Posterior cingulate gyrus (tissue), 11 donors: ENCODE measurements at regions of chr14 and their contacts with region 1.

Region 1: DNA sequence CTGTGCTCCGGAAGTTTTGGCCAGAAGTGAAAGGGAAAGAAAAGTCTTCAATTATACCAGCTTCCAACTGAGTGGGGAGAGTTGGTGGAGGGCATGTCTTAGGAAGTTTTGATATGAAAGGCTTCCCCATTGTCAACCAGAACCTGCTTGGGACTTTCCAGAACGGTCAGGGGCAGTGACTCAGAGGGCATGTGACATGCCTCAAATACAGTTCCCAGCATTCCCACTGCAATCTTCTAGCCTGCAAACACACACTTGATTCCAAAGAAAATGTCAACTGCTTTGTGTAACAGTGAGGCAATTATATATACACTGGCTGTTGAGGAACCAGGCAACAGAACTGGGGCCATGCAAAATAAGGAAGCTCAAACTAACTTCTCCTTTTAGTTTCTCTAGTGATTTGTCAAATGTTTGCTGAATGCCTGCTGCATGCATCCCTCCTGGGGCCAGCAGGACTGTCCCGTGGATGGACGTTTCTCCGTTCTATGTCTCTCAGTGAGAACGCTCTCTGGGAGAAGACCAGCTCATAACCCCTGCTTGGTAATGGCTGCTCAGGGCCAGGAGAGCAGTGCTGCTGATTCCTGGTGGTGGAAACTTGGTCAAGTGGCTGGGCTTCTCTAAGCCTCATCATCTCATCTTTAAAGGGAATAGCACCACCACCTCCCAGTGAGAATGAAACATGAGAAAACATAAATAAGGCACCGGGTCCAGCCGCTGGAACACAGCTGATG is 18.3 kb downstream of the SLC25A47 start:
- DNase-seq: peak in 3 of 10 donors; percentile 48 to 83 (median 60)

Region 2: GRCh38 chr14:99441157-99441870 is 900.2 kb before region 1 on chr14:
- intact Hi-C with region 1: no loop called
- DNase-seq: no peak

Region 3: GRCh38 chr14:100306420-100307219 is 34.8 kb before region 1 on chr14 and contains the start of gene SLC25A29:
- intact Hi-C with region 1: loop called (anchors 2 kb)
- DNase-seq: peak; percentile 86 to 99 (median 91)